Right ventricle myocardium inferior (tissue), 1 donor: ENCODE measurements at regions of chr7 and their contacts with region 1.

Region 1: DNA sequence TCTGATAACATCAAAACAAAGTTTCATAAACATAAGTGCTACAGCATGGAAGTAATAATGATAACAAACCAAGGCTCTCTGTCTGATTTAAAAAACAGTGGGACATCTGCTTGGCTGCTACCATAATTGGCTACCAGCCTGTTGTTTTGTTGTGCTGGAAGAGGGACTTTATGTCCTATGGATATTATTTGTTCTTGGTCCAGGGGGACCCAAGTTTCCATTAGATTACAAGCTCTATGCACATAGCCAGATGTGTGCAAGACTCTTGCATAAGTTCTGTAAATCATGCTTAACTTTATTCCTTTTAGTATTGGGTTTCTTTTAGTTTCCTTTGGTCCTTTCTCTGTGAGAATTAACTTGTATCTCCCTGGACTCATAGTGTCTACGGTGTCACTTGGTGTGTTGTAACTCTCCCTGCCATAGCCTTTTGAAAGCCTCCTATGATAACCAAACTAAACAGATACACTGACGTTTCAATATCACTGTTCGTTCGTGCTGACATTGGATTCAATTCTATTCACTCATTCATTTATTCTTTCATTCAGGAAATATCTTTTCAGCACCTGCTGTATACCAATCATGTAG is 41.4 kb upstream of the CD36 start:
- DNase-seq: no peak
- ATAC-seq: peak; percentile 53

Region 2: GRCh38 chr7:80552304-80552703 is 44.7 kb before region 1 on chr7:
- intact Hi-C with region 1: loop called (anchors 5 kb)
- DNase-seq: no peak
- ATAC-seq: no peak